AG04450 (cell line): ENCODE measurements at regions of chr2 and their contacts with region 1.

Region 1: DNA sequence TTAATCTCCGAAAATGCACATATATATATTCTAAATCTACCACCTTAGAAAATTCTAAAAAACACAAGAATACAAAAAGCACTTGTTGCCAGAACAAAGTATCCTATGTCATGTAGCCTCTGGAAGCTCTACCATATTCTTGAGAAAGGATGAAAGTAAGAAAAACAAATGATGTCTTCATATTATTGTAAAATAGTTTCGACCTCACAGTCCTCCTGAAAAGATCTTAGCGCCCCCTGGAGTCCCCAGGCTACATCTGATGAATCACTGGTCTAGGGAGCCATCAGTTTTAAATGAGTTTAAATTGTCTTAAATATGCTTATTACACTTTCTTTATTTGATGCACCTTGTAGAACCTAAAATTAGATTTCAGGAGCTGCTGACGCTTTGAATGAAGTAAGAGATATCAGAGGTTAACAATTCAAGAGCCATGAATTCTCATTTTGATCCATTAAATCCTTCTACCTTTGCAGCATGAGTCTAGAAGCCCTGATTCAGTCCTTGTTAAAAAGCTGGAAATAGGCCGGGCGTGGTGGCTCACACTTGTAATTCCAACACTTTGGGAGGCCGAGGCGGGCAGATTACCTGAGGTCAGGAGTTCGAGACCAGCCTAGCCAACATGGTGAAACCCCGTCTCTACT is 138.8 kb downstream of the MCFD2 start:
- DNase-seq: no peak
- H3K4me3 ChIP-seq: no peak overlapping the region
- H3K27ac ChIP-seq: no peak overlapping the region
- H3K27me3 ChIP-seq: no peaks in the 10 kb centered on the region
- CTCF ChIP-seq: peak; percentile 79

Region 2: DNA sequence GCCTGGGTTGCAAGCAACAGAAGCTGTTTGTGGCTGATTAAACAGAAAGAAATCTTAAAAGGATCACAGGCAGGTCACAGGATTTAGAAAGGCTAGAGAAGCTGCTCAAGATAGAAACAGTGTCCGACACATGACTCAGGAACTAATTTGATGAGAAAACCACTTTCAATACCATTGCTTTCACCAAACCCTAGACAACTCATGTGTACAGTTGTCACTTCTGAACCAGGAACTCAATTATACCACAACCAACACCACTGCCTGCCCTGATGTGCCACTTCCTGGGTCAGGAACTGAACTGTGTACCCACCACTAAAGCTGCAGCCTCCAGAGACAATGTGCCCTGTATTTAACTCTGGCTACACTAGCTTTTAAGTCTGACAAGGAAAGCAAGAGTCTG is 241.4 kb before region 1 on chr2:
- CTCF ChIA-PET with region 1: no interaction called
- POLR2A ChIA-PET with region 1: no interaction called
- DNase-seq: no peak
- H3K4me3 ChIP-seq: no peak overlapping the region
- H3K27ac ChIP-seq: no peak overlapping the region
- H3K27me3 ChIP-seq: no peaks in the 10 kb centered on the region
- CTCF ChIP-seq: no peak

Region 3: GRCh38 chr2:46657042-46657504 is 119.7 kb before region 1 on chr2:
- CTCF ChIA-PET with region 1: interaction called, 19 read pairs
- POLR2A ChIA-PET with region 1: no interaction called
- DNase-seq: no peak
- H3K4me3 ChIP-seq: no peak overlapping the region
- H3K27ac ChIP-seq: no peak overlapping the region
- H3K27me3 ChIP-seq: no peaks in the 10 kb centered on the region
- CTCF ChIP-seq: peak; percentile 41; the same call in 1 of the 2 replicates

Region 4: DNA sequence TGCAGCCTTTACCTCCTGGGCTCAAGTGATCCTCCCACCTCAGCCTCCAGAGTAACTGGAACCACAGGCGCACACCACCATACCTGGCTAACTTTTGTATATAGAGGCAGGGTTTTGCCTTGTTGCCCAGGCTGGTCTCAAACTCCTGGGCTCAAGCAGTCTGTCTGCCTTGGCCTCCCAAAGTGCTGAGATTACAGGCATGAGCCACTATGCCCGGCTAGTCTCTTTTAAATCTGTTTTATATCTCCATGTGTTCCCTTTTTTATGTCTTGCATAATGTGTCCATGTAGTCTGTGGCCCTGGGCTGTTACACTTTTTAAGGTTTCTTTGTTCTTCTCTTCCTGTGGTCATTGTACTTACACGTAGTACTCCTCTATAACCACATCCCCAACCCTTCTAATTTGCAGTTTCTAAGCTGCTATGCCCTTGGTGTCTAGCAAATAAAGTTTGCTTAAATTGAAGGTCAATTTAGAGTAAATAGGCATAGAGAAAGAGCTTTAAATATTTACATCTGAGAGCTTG is 29.4 kb before region 1 on chr2:
- CTCF ChIA-PET with region 1: interaction called, 11 read pairs
- POLR2A ChIA-PET with region 1: no interaction called
- DNase-seq: no peak
- H3K4me3 ChIP-seq: no peak overlapping the region
- H3K27ac ChIP-seq: peak overlapping the region; percentile 47
- H3K27me3 ChIP-seq: no peaks in the 10 kb centered on the region
- CTCF ChIP-seq: no peak

Region 5: DNA sequence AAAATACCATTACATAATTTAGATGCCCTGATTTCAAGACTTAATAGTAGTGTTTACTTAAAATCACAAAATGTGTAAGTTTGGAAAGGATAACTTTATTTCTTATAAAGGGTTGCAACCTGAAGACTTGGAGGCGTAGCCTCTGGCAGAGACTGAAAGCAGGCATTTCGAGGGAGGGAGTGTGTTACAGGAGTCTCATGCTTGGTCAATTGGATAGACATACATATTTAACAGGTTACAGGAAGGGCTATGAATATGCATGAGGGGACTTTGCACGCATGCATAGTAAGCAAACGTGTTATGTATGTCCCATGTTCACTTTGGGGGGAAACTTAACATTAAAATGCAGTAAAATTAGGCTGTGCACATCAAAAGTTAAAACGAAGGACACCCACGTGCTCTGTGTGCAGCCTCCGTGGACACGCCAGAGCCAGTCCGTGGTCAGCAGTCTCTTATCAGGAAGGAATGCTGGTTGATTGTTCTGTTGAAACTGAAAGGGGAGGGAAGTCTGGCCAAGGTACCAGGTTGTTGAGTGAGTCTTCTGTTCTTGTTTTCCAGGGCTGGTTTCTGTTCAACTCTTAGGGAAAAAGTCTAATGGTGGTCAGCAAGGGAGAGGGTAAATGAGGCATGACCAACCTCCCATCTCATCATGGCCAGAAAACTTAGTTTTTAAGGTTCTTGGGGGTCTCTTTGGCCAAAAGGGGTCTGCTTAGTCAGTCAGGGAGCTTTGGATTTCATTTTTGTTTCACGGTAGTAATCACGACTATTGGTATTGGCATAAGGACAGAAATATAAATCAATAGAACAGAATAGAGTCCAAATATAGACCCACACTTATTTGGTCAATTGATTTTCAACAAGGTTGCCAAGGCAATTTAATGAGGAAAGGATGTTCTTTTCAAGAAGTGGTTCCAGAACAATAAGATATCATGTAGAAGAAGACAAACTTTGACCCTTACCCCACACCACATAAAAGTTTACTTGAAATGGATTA is 16.9 kb after region 1 on chr2:
- CTCF ChIA-PET with region 1: interaction called, 36 read pairs
- POLR2A ChIA-PET with region 1: no interaction called
- DNase-seq: no peak
- H3K4me3 ChIP-seq: no peak overlapping the region
- H3K27ac ChIP-seq: no peak overlapping the region
- H3K27me3 ChIP-seq: no peaks in the 10 kb centered on the region
- CTCF ChIP-seq: no peak

Region 6: GRCh38 chr2:46979571-46979979 is 202.8 kb after region 1 on chr2:
- CTCF ChIA-PET with region 1: no interaction called
- POLR2A ChIA-PET with region 1: no interaction called
- DNase-seq: no peak
- H3K4me3 ChIP-seq: no peak overlapping the region
- H3K27ac ChIP-seq: no peak overlapping the region
- H3K27me3 ChIP-seq: no peaks in the 10 kb centered on the region
- CTCF ChIP-seq: no peak